Activated B cell treated with CpG ODN at 0.5 μM for 24 hours (primary cell): ENCODE measurements at regions of chr12 and their contacts with region 1.

Region 1: GRCh38 chr12:56987551-56988053 is 18.7 kb downstream of the ZBTB39 start:
- DNase-seq: peak; percentile 66
- ATAC-seq: peak; percentile 96
- H3K4me3 Mint-ChIP-seq: peak overlapping the region; percentile 35
- H3K27ac Mint-ChIP-seq: no peak overlapping the region
- H3K4me1 Mint-ChIP-seq: peaks cover 12% of the 10 kb centered on the region
- H3K27me3 Mint-ChIP-seq: peaks cover 6% of the 10 kb centered on the region
- CTCF ChIP-seq: peak; percentile 89

Region 2: DNA sequence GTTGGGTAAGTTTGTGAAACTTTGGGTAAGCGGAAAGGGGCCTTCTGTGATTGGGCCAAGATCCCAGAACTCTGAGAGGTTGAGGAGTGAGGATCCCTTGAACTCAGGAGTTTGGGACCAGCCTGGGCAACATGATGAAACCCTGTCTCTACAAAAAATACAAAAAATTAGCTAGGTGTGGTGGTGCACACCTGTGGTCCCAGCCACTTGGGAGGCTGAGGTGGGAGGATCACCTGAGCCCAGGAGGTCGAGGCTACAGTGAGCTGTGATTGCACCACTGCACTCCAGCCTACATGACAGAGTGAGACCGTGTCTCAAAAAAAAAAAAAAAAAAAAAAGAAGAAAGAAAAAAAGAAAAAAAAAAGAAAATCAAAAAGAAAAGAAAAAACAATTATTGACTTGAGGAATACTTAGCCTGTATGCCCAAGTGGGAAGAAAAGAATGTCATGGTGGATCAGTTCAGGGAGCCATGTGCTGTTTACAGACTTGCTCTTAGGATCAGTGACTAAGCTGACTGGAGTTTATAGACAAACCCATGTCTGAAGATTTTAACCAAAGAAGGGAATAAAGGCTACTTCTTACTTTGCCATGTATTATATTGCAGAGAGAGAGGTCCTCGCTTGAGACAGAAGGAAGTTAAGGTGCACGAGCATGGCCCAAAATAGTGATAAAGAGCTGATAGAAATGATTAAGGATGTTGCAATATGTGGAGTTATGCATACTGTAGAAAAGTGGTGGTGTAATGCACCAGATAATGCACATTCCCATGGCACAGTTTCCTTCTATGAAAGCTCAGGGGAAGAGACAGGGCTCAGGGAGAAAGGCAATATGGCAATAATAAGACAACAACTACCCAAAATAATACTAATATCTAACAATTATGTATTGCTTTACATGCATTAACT is 223.6 kb before region 1 on chr12:
- CTCF ChIA-PET with region 1: interaction called, 68 read pairs
- POLR2A ChIA-PET with region 1: no interaction called
- intact Hi-C with region 1: no loop called
- DNase-seq: no peak
- ATAC-seq: no peak
- H3K4me3 Mint-ChIP-seq: no peak overlapping the region
- H3K27ac Mint-ChIP-seq: no peak overlapping the region
- H3K4me1 Mint-ChIP-seq: peaks cover 11% of the 10 kb centered on the region
- H3K27me3 Mint-ChIP-seq: no peaks in the 10 kb centered on the region
- CTCF ChIP-seq: no peak

Region 3: GRCh38 chr12:56839915-56840325 is 147.7 kb before region 1 on chr12:
- CTCF ChIA-PET with region 1: interaction called, 8 read pairs
- POLR2A ChIA-PET with region 1: no interaction called
- intact Hi-C with region 1: loop called (anchors 1 kb)
- DNase-seq: no peak
- ATAC-seq: peak; percentile 47
- H3K4me3 Mint-ChIP-seq: no peak overlapping the region
- H3K27ac Mint-ChIP-seq: no peak overlapping the region
- H3K4me1 Mint-ChIP-seq: peaks cover 12% of the 10 kb centered on the region
- H3K27me3 Mint-ChIP-seq: peaks cover 9% of the 10 kb centered on the region
- CTCF ChIP-seq: no peak

Region 4: GRCh38 chr12:56998981-56999380 is 11.4 kb after region 1 on chr12:
- CTCF ChIA-PET with region 1: interaction called, 23 read pairs
- POLR2A ChIA-PET with region 1: interaction called, 3 read pairs
- intact Hi-C with region 1: no loop called
- DNase-seq: no peak
- ATAC-seq: peak; percentile 86
- H3K4me3 Mint-ChIP-seq: peak overlapping the region; percentile 20
- H3K27ac Mint-ChIP-seq: peak overlapping the region; percentile 82
- H3K4me1 Mint-ChIP-seq: peaks cover 38% of the 10 kb centered on the region
- H3K27me3 Mint-ChIP-seq: no peaks in the 10 kb centered on the region
- CTCF ChIP-seq: no peak

Region 5: DNA sequence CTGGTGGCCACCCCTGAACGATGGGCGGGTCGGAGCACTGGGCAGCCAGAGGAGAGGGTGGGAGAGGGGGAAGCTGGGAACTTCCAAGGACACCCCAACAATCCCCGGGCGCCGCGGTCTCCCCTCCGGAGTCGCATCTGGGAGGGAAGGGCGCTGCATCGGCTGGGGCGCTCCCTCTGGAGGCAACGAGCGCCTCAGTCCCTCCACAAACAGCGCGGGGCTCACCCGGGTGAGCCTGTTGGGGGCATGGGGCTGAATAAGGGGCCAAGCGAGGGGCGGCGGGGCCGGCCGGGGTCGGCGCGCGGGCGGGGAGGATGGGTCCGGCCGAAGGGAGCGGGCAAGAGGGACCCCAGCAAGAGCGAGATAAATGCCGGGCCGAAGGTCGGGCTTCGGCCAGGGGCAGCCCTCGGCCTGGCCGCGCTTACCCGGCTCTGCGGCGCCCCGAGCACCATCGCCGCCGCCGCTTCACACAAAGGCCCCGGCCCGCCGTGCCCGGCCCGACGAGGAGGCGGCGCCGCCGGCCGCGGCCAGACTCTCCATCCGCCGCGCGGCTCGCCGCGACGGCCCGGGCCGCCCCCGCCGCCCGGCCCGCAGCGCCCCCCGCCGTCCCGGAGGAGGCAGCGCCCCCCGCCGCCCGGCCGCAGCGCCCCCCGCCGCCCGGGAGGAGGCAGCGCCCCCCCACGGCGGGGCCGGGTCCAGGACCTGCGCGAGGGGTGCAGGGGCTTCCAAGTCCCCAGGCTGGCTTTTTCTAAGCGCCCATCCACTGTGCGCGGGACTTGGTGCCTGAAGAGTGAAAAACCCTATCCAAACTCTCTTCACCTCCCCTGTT is 18.6 kb after region 1 on chr12 and contains the start of gene ZBTB39:
- CTCF ChIA-PET with region 1: interaction called, 10 read pairs
- POLR2A ChIA-PET with region 1: interaction called, 3 read pairs
- intact Hi-C with region 1: loop called (anchors 2 kb)
- DNase-seq: peak; percentile 81
- ATAC-seq: peak; percentile 93
- H3K4me3 Mint-ChIP-seq: peak within 1 kb of the TSS; percentile 90
- H3K27ac Mint-ChIP-seq: peak within 1 kb of the TSS; percentile 82
- H3K4me1 Mint-ChIP-seq: peaks cover 35% of the 10 kb centered on the region
- H3K27me3 Mint-ChIP-seq: no peaks in the 10 kb centered on the region
- CTCF ChIP-seq: no peak
- total RNA-seq, gene ZBTB39: 12.6 and 13.3 TPM in 2 replicates

Region 6: GRCh38 chr12:57058454-57058853 is 70.9 kb after region 1 on chr12:
- CTCF ChIA-PET with region 1: no interaction called
- POLR2A ChIA-PET with region 1: no interaction called
- intact Hi-C with region 1: no loop called
- DNase-seq: no peak
- ATAC-seq: peak; percentile 59
- H3K4me3 Mint-ChIP-seq: peak overlapping the region; percentile 50
- H3K27ac Mint-ChIP-seq: peak overlapping the region; percentile 84
- H3K4me1 Mint-ChIP-seq: peaks cover 61% of the 10 kb centered on the region
- H3K27me3 Mint-ChIP-seq: no peaks in the 10 kb centered on the region
- CTCF ChIP-seq: no peak